Right ventricle myocardium inferior (tissue), 1 donor: ENCODE measurements at regions of chr16 and their contacts with region 1.

Region 1: DNA sequence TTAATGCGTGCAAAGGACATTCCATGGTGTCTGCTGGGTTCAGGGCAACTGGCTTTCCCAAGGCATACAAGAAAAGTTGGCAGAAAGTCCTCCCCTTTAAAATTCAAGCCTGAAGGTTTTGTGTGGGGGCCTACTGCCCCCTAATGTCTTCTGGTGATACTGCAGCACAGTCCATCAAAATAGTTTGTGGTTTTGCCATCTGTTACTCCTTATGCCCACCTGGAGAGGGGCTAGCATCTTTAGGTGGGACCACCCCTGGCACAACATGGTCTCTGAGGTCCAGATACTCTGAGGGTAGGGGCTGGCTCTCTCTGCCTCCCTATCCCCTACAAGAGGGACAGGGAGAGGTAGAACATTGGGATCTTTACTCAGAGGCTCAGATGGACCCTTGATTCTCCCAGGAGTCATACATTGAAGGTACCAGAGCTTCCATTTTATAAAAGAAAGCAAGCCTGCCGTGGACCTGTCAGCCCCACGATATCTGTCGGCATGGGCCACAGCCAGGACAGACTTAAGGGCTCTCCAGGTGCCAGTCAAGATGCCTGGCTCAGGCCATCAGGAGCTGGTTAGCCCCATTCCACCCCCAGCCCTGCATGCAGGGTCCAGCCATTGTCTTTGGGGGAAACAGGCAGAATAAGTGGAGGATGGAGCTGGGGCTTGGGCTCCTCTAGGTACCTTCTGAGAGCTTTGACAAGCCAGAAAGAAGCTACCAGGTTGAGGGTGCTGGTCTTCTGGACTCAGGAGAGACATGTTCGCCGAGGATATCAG is 6.3 kb downstream of the ESRP2 start:
- DNase-seq: no peak
- ATAC-seq: peak; percentile 36

Region 2: GRCh38 chr16:67173808-67174705 is 1055.6 kb before region 1 on chr16:
- intact Hi-C with region 1: no loop called
- DNase-seq: peak; percentile 94
- ATAC-seq: peak; percentile 71

Region 3: GRCh38 chr16:67993189-67994039 is 236.2 kb before region 1 on chr16:
- intact Hi-C with region 1: loop called (anchors 2 kb)
- DNase-seq: peak; percentile 95
- ATAC-seq: peak; percentile 95

Region 4: GRCh38 chr16:68093816-68094613 is 135.6 kb before region 1 on chr16:
- intact Hi-C with region 1: loop called (anchors 2 kb)
- DNase-seq: no peak
- ATAC-seq: peak; percentile 69

Region 5: DNA sequence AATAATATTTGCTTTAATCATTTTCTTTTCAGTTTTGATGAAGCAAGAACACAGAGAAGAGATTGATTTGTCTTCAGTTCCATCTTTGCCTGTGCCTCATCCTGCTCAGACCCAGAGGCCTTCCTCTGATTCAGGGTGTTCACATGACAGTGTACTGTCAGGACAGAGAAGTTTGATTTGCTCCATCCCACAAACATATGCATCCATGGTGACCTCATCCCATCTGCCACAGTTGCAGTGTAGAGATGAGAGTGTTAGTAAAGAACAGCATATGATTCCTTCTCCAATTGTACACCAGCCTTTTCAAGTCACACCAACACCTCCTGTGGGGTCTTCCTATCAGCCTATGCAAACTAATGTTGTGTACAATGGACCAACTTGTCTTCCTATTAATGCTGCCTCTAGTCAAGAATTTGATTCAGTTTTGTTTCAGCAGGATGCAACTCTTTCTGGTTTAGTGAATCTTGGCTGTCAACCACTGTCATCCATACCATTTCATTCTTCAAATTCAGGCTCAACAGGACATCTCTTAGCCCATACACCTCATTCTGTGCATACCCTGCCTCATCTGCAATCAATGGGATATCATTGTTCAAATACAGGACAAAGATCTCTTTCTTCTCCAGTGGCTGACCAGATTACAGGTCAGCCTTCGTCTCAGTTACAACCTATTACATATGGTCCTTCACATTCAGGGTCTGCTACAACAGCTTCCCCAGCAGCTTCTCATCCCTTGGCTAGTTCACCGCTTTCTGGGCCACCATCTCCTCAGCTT is 38.7 kb before region 1 on chr16:
- intact Hi-C with region 1: no loop called
- DNase-seq: no peak
- ATAC-seq: no peak

Region 6: DNA sequence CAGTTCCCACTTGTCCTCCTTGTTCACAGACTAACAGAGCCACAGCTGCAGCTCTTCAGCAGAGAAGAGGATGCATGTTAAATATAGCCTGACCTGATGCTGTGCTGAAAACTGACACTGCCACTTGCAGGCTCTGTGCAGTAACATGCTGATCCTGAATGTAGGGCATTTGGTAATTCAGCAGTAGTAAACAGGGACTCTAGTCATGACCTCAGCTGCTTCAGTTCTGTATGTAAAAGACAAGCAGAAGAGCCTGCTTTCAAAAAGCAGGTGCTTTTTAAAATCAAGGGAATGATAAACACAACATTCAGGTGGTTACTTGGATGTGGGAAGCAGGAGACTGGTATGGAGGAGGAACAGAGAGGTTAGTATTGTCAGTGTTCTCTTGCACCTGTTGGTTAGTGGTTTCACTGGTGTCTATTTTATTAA is 27.5 kb before region 1 on chr16:
- intact Hi-C with region 1: no loop called
- DNase-seq: no peak
- ATAC-seq: peak; percentile 96